ENCODE measurements at regions of chr9 and their contacts with region 1.

Region 1: DNA sequence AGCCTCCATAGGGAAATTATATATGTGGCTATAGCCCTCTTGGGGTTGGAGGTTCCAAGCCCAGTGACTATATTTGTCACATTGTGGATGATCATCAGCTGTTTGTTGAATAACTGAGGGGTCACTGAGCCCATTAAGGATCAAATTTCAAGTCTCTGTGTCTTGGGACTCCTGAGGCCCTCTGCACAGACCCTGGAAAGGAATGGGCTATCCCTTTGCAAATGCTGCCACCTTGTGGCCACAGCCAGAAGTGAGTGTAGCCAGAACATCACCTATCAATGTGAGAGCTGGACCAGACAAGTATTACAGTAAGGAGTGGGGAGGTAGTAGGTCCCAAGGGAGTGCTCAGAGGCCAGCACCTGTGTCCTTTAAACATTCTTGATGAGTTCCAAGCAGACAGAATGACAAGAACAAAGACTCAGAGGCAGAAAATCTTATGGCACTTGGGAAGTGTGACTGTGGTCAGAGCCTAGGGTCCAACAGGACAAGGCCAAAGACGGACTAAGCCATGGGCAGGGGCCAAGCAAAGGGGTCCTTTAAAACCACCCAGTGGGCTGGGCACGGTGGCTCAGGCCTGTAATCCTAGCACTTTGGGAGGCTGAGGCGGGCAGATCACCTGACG is 8.2 kb downstream of the RPP25L start:
- DNase-seq: peak; percentile 85
- H3K4me3 Mint-ChIP-seq: no peak overlapping the region
- H3K27ac Mint-ChIP-seq: no peak overlapping the region
- H3K4me1 Mint-ChIP-seq: no peaks in the 10 kb centered on the region
- H3K27me3 Mint-ChIP-seq: no peaks in the 10 kb centered on the region

Region 2: DNA sequence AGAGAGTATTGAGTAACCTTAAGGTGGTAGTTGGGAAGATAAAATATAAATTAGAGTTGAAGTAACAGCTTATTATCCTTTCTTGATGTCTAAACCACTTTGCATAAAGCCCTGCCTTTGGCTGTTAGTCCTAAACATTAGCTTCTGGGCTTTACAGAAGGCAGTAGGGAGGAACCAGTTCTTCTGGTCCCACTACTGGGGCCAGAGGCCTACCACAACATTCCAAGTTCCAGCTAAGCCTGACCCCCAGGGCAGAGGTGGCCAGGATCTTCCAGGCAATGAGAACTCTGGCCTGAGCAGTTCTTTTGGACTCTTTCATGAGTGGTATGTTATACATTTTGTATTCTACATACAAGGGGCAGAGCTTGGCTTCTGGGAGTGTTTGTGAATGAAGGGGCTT is 119.0 kb before region 1 on chr9:
- CTCF ChIA-PET with region 1: no interaction called
- POLR2A ChIA-PET with region 1: no interaction called
- intact Hi-C with region 1: no loop called
- DNase-seq: no peak
- H3K4me3 Mint-ChIP-seq: no peak overlapping the region
- H3K27ac Mint-ChIP-seq: no peak overlapping the region
- H3K4me1 Mint-ChIP-seq: peaks cover 2% of the 10 kb centered on the region
- H3K27me3 Mint-ChIP-seq: peaks cover 18% of the 10 kb centered on the region

Region 3: DNA sequence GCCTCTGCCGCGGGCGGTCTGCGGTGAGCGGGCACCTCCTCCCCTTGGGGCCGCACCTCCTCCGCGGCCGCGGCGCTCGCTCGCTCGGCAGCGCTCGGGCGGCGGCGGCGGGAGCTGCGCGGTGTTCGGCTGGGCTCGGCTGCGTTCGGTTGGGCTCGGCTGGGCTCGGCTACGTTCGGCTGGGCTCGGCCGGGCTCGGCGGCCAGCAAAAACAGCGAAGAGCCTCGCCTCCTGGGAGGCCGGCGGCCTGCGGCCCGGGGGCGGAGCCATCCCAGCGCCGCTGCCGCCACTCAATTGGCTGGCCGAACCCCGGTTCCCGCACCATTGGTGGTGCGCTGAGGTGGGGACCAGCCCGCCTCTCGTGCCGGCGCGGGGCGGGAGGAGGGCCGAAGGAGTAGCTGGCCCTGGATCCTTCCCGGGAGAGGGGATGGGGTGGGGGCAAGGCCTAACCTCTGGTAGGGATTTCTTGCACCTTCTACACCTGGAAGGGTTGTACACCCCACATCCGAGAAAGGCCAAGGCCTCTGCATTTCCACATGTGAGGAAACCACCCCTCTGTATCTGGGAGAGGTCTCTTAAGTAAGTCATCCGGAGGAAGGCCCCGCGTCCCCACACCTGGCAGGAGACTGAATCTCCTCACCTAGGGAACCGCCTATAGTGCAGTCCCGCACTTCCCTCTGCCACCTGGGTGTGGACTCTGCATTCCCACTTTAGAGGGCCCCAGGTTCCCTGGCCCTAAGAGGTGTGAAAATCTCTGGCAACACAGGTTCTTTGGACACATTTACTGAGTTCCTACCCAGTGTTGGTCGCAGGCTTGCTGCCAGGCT is 80.5 kb before region 1 on chr9 and contains the start of gene ENHO:
- CTCF ChIA-PET with region 1: interaction called, 10 read pairs
- POLR2A ChIA-PET with region 1: no interaction called
- intact Hi-C with region 1: no loop called
- DNase-seq: peak; percentile 94
- H3K4me3 Mint-ChIP-seq: peak within 1 kb of the TSS; percentile 48
- H3K27ac Mint-ChIP-seq: no peak within 1 kb of the TSS
- H3K4me1 Mint-ChIP-seq: peaks cover 16% of the 10 kb centered on the region
- H3K27me3 Mint-ChIP-seq: peaks cover 5% of the 10 kb centered on the region
- total RNA-seq, gene ENHO: 0.26 to 0.36 TPM

Region 4: GRCh38 chr9:34546834-34547827 is 56.6 kb before region 1 on chr9:
- CTCF ChIA-PET with region 1: interaction called, 23 read pairs
- POLR2A ChIA-PET with region 1: no interaction called
- intact Hi-C with region 1: loop called (anchors 1 kb)
- DNase-seq: peak; percentile 77
- H3K4me3 Mint-ChIP-seq: no peak overlapping the region
- H3K27ac Mint-ChIP-seq: no peak overlapping the region
- H3K4me1 Mint-ChIP-seq: no peaks in the 10 kb centered on the region
- H3K27me3 Mint-ChIP-seq: peaks cover 9% of the 10 kb centered on the region

Region 5: DNA sequence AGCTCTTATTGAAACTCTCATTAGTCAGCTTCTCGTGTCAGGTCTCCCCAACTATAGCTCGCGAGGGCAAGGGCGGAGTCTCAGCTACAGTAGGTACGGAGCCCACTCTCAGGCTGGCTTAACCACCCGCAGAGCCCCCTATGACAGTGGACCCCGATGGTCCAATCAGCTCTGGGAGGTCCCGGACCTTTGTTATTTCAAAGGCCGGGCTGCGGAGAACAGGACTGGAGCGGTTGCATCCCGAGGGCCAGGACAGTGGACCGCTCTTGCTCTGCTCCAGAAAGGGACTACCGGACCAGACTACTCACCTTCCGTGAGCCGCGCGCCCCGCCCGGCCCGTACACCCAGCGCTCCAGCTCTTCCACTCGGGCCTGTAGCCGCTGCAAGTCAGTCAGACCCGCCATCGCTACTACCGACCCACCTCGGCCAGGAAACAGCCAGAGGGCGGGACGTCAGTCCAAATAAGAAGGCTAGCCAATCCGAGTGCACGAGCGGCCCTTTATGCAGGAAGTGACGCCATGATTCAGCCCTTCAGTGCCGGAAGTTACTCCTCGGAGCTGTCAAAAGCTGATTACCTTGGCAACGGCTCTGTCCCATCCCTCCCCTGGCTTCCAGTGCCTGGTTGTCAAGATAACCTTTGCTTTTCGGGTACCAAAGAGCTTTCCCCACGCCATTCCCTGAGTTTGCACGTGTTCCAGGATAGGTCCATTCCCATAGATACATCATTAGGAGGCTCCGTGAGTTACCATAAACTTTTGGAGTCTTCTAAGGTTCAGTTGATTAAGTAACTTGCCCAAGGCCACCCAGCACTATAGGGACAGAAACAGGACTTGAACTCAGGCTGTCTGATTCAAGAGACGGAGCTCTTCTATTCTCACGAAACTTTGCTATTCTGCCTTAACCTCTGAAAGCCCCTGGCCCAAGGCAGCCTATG is 16.6 kb after region 1 on chr9 and contains the start of gene DCTN3:
- CTCF ChIA-PET with region 1: interaction called, 11 read pairs
- POLR2A ChIA-PET with region 1: no interaction called
- intact Hi-C with region 1: no loop called
- DNase-seq: peak; percentile 95
- H3K4me3 Mint-ChIP-seq: peak within 1 kb of the TSS; percentile 93
- H3K27ac Mint-ChIP-seq: peak within 1 kb of the TSS; percentile 52
- H3K4me1 Mint-ChIP-seq: peaks cover 26% of the 10 kb centered on the region
- H3K27me3 Mint-ChIP-seq: peaks cover 25% of the 10 kb centered on the region
- total RNA-seq, gene DCTN3: 85.3 to 87.3 TPM

Region 6: GRCh38 chr9:34744295-34745221 is 140.8 kb after region 1 on chr9:
- CTCF ChIA-PET with region 1: no interaction called
- POLR2A ChIA-PET with region 1: no interaction called
- intact Hi-C with region 1: no loop called
- DNase-seq: no peak
- H3K4me3 Mint-ChIP-seq: no peak overlapping the region
- H3K27ac Mint-ChIP-seq: no peak overlapping the region
- H3K4me1 Mint-ChIP-seq: peaks cover 4% of the 10 kb centered on the region
- H3K27me3 Mint-ChIP-seq: peaks cover 20% of the 10 kb centered on the region

Measured in activated CD4-positive, alpha-beta memory T cell treated with anti-CD3 and anti-CD28 coated beads for 36 hours (primary cell).